GM12878 (cell line): ENCODE measurements at regions of chr6 and their contacts with region 1.

Region 1: GRCh38 chr6:53492860-53493634 is 51.9 kb downstream of the GCLC start:
- DNase-seq: no peak
- ATAC-seq: peak; percentile 82
- H3K4me3 ChIP-seq: no peak overlapping the region
- H3K27ac ChIP-seq: no peak overlapping the region
- H3K4me1 ChIP-seq: no peaks in the 10 kb centered on the region
- H3K27me3 ChIP-seq: no peaks in the 10 kb centered on the region
- CTCF ChIP-seq: peak; percentile 54 to 73 (median 71); a peak in 5 of 6 replicates
- EP300 ChIP-seq: no peak
- POLR2A ChIP-seq: no peak
- RAD21 ChIP-seq: peak; percentile 79

Region 2: DNA sequence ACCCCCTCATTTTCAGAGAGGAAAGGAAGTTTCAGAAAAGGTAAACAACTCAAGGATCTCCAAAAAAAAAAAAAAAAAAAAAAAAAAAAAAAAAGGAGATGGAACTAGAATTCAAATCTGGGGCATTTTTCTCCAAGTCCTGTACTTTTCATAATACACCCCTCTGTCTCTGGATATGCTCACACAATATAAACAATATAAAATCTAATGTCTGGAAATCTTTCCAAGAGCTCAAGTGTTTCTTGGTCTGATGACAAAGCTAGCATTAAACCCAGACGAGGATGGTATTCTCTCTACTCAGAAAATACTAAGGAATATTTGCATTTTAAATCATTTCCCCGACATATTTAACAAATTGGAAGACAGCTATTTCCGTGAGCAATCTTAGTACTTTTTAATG is 350.2 kb before region 1 on chr6:
- CTCF ChIA-PET with region 1: interaction called, 3 read pairs
- POLR2A ChIA-PET with region 1: interaction called, 10 read pairs
- RAD21 ChIA-PET with region 1: no interaction called
- SMC1A ChIA-PET with region 1: interaction called, 4 read pairs
- in situ Hi-C with region 1: no loop called
- intact Hi-C with region 1: no loop called
- DNase-seq: no peak
- ATAC-seq: no peak
- H3K4me3 ChIP-seq: no peak overlapping the region
- H3K27ac ChIP-seq: no peak overlapping the region
- H3K4me1 ChIP-seq: no peaks in the 10 kb centered on the region
- H3K27me3 ChIP-seq: no peaks in the 10 kb centered on the region
- CTCF ChIP-seq: no peak
- EP300 ChIP-seq: no peak
- POLR2A ChIP-seq: no peak
- RAD21 ChIP-seq: no peak

Region 3: GRCh38 chr6:53348371-53349208 is 144.5 kb before region 1 on chr6 and contains the start of gene ELOVL5:
- CTCF ChIA-PET with region 1: no interaction called
- POLR2A ChIA-PET with region 1: no interaction called
- RAD21 ChIA-PET with region 1: no interaction called
- SMC1A ChIA-PET with region 1: no interaction called
- in situ Hi-C with region 1: no loop called
- intact Hi-C with region 1: no loop called
- DNase-seq: peak; percentile 73
- ATAC-seq: peak; percentile 80
- H3K4me3 ChIP-seq: peak within 1 kb of the TSS; percentile 92
- H3K27ac ChIP-seq: peak within 1 kb of the TSS; percentile 85
- H3K4me1 ChIP-seq: peaks cover 11% of the 10 kb centered on the region
- H3K27me3 ChIP-seq: no peaks in the 10 kb centered on the region; a peak in 1 of 4 replicates
- CTCF ChIP-seq: no peak
- EP300 ChIP-seq: no peak
- POLR2A ChIP-seq: peak; percentile 81
- RAD21 ChIP-seq: no peak
- polyA plus RNA-seq, gene ELOVL5: 187 to 195 TPM

Region 4: GRCh38 chr6:53391170-53391569 is 101.9 kb before region 1 on chr6:
- CTCF ChIA-PET with region 1: no interaction called
- POLR2A ChIA-PET with region 1: no interaction called
- RAD21 ChIA-PET with region 1: no interaction called
- SMC1A ChIA-PET with region 1: no interaction called
- in situ Hi-C with region 1: no loop called
- intact Hi-C with region 1: no loop called
- DNase-seq: no peak
- ATAC-seq: no peak
- H3K4me3 ChIP-seq: no peak overlapping the region
- H3K27ac ChIP-seq: no peak overlapping the region
- H3K4me1 ChIP-seq: no peaks in the 10 kb centered on the region
- H3K27me3 ChIP-seq: no peaks in the 10 kb centered on the region
- CTCF ChIP-seq: no peak
- EP300 ChIP-seq: no peak
- POLR2A ChIP-seq: no peak
- RAD21 ChIP-seq: no peak

Region 5: GRCh38 chr6:53524455-53524815 is 31.4 kb after region 1 on chr6:
- CTCF ChIA-PET with region 1: interaction called, 11 read pairs
- POLR2A ChIA-PET with region 1: no interaction called
- RAD21 ChIA-PET with region 1: no interaction called
- SMC1A ChIA-PET with region 1: interaction called, 3 read pairs
- in situ Hi-C with region 1: no loop called
- intact Hi-C with region 1: no loop called
- DNase-seq: no peak
- ATAC-seq: no peak
- H3K4me3 ChIP-seq: no peak overlapping the region
- H3K27ac ChIP-seq: no peak overlapping the region
- H3K4me1 ChIP-seq: no peaks in the 10 kb centered on the region
- H3K27me3 ChIP-seq: no peaks in the 10 kb centered on the region
- CTCF ChIP-seq: no peak
- EP300 ChIP-seq: no peak
- POLR2A ChIP-seq: no peak
- RAD21 ChIP-seq: no peak

Region 6: GRCh38 chr6:53539561-53539960 is 46.5 kb after region 1 on chr6:
- CTCF ChIA-PET with region 1: interaction called, 20 read pairs
- POLR2A ChIA-PET with region 1: no interaction called
- RAD21 ChIA-PET with region 1: interaction called, 9 read pairs
- SMC1A ChIA-PET with region 1: interaction called, 5 read pairs
- in situ Hi-C with region 1: no loop called
- intact Hi-C with region 1: loop called (anchors 2 kb)
- DNase-seq: no peak
- ATAC-seq: no peak
- H3K4me3 ChIP-seq: no peak overlapping the region
- H3K27ac ChIP-seq: no peak overlapping the region
- H3K4me1 ChIP-seq: peaks cover 5% of the 10 kb centered on the region; the same call in 1 of the 2 replicates
- H3K27me3 ChIP-seq: no peaks in the 10 kb centered on the region
- CTCF ChIP-seq: no peak
- EP300 ChIP-seq: no peak
- POLR2A ChIP-seq: no peak
- RAD21 ChIP-seq: no peak

Region 7: GRCh38 chr6:53603386-53604116 is 110.5 kb after region 1 on chr6:
- CTCF ChIA-PET with region 1: no interaction called
- POLR2A ChIA-PET with region 1: no interaction called
- RAD21 ChIA-PET with region 1: no interaction called
- SMC1A ChIA-PET with region 1: no interaction called
- in situ Hi-C with region 1: no loop called
- intact Hi-C with region 1: no loop called
- DNase-seq: no peak
- ATAC-seq: no peak
- H3K4me3 ChIP-seq: no peak overlapping the region
- H3K27ac ChIP-seq: no peak overlapping the region
- H3K4me1 ChIP-seq: no peaks in the 10 kb centered on the region
- H3K27me3 ChIP-seq: peaks cover 0 to 2% of the 10 kb centered on the region in 2 experiments; a peak in 1 of 4 replicates
- CTCF ChIP-seq: no peak
- EP300 ChIP-seq: no peak
- POLR2A ChIP-seq: no peak
- RAD21 ChIP-seq: no peak

Region 8: GRCh38 chr6:53651764-53652401 is 158.8 kb after region 1 on chr6:
- CTCF ChIA-PET with region 1: interaction called, 145 read pairs
- POLR2A ChIA-PET with region 1: no interaction called
- RAD21 ChIA-PET with region 1: interaction called, 27 read pairs
- SMC1A ChIA-PET with region 1: interaction called, 41 read pairs
- in situ Hi-C with region 1: loop called (anchors 5 kb)
- intact Hi-C with region 1: loop called (anchors 1 kb)
- DNase-seq: no peak
- ATAC-seq: peak; percentile 90
- H3K4me3 ChIP-seq: peak overlapping the region; percentile 57; the same call in 1 of the 2 replicates
- H3K27ac ChIP-seq: no peak overlapping the region
- H3K4me1 ChIP-seq: peaks cover 8% of the 10 kb centered on the region
- H3K27me3 ChIP-seq: peaks cover 9 to 16% of the 10 kb centered on the region in 2 experiments
- CTCF ChIP-seq: peak in 1 of 3 experiments; percentile 1; a peak in 2 of 6 replicates
- EP300 ChIP-seq: no peak
- POLR2A ChIP-seq: no peak
- RAD21 ChIP-seq: no peak

Region 9: GRCh38 chr6:53679446-53679933 is 186.4 kb after region 1 on chr6:
- CTCF ChIA-PET with region 1: interaction called, 6 read pairs
- POLR2A ChIA-PET with region 1: no interaction called
- RAD21 ChIA-PET with region 1: interaction called, 3 read pairs
- SMC1A ChIA-PET with region 1: interaction called, 6 read pairs
- in situ Hi-C with region 1: no loop called
- intact Hi-C with region 1: loop called (anchors 1 kb)
- DNase-seq: no peak
- ATAC-seq: peak; percentile 85
- H3K4me3 ChIP-seq: no peak overlapping the region
- H3K27ac ChIP-seq: no peak overlapping the region
- H3K4me1 ChIP-seq: no peaks in the 10 kb centered on the region
- H3K27me3 ChIP-seq: no peaks in the 10 kb centered on the region; a peak in 1 of 4 replicates
- CTCF ChIP-seq: peak; percentile 23 to 35 (median 28); a peak in 3 of 6 replicates
- EP300 ChIP-seq: no peak
- POLR2A ChIP-seq: no peak
- RAD21 ChIP-seq: peak; percentile 36; the same call in 1 of the 2 replicates

Region 10: DNA sequence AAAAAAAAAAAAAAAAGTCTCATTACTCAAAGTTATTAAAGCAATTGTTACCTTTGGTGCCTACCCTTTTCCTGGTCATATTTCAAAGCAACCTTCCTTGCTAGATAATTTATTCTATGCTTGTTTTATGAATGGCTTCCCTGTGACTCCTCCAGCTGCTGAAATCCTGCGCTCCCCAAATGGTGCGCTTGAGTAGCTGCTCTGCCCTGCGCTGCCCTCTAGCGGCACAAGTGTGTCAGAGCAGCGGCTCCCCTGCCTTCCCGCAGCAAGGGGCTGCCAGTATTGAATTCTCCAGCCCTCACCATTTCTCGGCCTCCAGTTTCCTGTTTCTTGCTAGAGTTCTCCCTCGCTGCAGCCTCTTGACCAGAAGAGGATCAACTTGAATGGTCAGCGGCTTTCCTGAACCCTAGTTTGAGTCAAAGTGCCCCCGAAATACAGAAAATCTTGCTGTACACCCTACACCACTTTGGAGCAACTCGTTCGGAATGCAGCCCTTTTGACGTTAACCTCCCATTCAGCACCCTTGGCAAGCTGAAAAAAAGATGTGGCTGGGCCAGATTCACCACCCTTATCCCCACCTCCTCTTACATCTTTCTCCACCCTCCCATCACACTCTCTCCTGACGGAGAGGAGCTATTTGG is 232.9 kb after region 1 on chr6:
- CTCF ChIA-PET with region 1: interaction called, 261 read pairs
- POLR2A ChIA-PET with region 1: no interaction called
- RAD21 ChIA-PET with region 1: interaction called, 21 read pairs
- SMC1A ChIA-PET with region 1: interaction called, 42 read pairs
- in situ Hi-C with region 1: loop called (anchors 5 kb)
- intact Hi-C with region 1: loop called (anchors 1 kb)
- DNase-seq: no peak
- ATAC-seq: peak; percentile 96
- H3K4me3 ChIP-seq: no peak overlapping the region
- H3K27ac ChIP-seq: no peak overlapping the region
- H3K4me1 ChIP-seq: no peaks in the 10 kb centered on the region
- H3K27me3 ChIP-seq: no peaks in the 10 kb centered on the region; a peak in 1 of 4 replicates
- CTCF ChIP-seq: peak; percentile 93 to 97 (median 95)
- EP300 ChIP-seq: no peak
- POLR2A ChIP-seq: no peak
- RAD21 ChIP-seq: peak; percentile 81

Region 11: GRCh38 chr6:54037277-54037779 is 544.3 kb after region 1 on chr6:
- CTCF ChIA-PET with region 1: no interaction called
- POLR2A ChIA-PET with region 1: no interaction called
- RAD21 ChIA-PET with region 1: no interaction called
- SMC1A ChIA-PET with region 1: no interaction called
- in situ Hi-C with region 1: no loop called
- intact Hi-C with region 1: no loop called
- DNase-seq: no peak
- ATAC-seq: no peak
- H3K4me3 ChIP-seq: no peak overlapping the region
- H3K27ac ChIP-seq: no peak overlapping the region
- H3K4me1 ChIP-seq: no peaks in the 10 kb centered on the region
- H3K27me3 ChIP-seq: no peaks in the 10 kb centered on the region; a peak in 1 of 4 replicates
- CTCF ChIP-seq: no peak
- EP300 ChIP-seq: no peak
- POLR2A ChIP-seq: no peak
- RAD21 ChIP-seq: no peak